Motor neuron (in vitro differentiated cells): ENCODE measurements at regions of chr17 and their contacts with region 1.

Region 1: DNA sequence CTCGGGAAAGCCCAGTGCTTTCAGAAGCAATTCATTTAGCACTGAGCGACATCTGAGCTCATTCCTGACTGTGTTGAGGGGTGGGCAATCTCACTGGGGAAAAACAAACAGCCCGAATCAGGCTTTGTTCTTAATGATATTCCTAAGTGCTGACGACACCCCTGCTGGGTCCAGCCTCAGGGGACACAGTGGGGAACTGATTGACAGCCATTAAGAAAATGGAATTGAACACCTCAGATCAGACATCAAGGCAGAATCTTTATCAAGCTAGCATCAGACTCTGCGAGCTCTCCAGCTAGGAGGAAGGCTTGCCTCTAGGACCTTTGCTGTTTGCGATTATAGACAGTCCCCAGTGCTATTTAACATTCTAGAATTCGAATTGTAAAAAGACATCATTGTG is 22.5 kb upstream of the LYRM9 start:
- ATAC-seq: peak in 7 of 8 experiments; percentile 46 to 90 (median 81)
- H3K4me3 ChIP-seq: no peak overlapping the region
- H3K27ac ChIP-seq: no peak overlapping the region
- H3K4me1 ChIP-seq: no peaks in the 10 kb centered on the region

Region 2: DNA sequence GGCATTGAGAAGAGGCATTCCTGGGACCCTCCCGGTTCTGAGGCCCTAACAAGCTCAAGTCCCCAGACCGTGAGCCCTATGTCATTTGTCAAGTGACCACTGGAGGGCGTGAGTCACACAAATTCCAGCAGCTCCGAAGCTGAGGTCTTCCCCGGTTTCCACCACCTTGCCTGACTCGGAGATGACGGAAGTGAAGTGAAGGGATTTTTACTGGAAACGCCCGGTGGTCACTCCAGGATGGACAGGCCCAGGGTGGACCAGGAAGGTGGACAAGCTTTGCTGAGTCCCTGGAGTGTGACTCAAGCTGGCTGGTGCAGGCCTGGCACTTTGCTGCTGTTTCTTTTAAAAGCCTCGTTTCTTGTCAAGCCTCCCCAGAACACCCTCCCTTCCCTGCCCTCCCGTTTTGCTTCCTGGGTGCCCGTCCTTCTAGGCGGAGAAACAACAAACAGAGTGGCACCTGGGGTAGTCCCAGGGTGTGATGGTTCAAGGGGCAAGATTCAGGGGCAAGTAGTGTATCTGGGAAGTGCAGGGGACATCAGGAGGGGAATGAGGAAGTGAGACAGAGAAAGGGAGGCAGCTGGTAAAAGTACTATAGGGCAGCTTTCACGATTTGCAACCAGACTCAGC is 110.1 kb before region 1 on chr17:
- in situ Hi-C with region 1: loop called in 1 of 9 experiments (anchors 25 kb)
- ATAC-seq: peak; percentile 88 to 100 (median 98)
- H3K4me3 ChIP-seq: peak overlapping the region in 2 of 5 donors; percentile 16 to 17
- H3K27ac ChIP-seq: no peak overlapping the region
- H3K4me1 ChIP-seq: peaks cover 0 to 5% of the 10 kb centered on the region in 2 donors

Region 3: DNA sequence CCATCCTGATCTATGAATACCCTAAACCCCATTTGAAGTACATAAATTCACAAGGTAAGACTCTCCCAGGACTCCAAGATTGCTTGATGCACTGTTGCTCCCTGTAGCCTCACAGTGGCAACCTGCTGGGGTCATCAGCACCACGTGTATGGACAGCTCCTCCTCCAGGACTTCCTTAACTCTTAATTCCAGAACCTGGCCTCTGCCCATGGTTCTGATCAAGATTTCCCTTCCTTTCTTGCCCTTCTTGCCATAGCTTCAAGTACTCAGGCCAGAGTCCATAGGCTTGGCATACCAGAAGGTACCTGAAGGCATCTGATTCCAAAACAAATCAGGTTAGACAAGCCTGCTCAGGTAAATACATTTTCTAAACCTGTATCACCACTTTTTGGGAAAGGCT is 92.8 kb after region 1 on chr17:
- in situ Hi-C with region 1: loop called in 1 of 9 experiments (anchors 25 kb)
- ATAC-seq: peak in 3 of 8 experiments; percentile 94 to 95 (median 94)
- H3K4me3 ChIP-seq: no peak overlapping the region
- H3K27ac ChIP-seq: no peak overlapping the region
- H3K4me1 ChIP-seq: no peaks in the 10 kb centered on the region

Region 4: GRCh38 chr17:28041068-28041843 is 125.5 kb after region 1 on chr17:
- in situ Hi-C with region 1: loop called in 1 of 9 experiments (anchors 25 kb)
- ATAC-seq: peak; percentile 91 to 95 (median 94)
- H3K4me3 ChIP-seq: peak overlapping the region; percentile 63 to 77 (median 69)
- H3K27ac ChIP-seq: peak overlapping the region; percentile 69 to 85
- H3K4me1 ChIP-seq: peaks cover 26 to 33% of the 10 kb centered on the region in 2 donors

Region 5: DNA sequence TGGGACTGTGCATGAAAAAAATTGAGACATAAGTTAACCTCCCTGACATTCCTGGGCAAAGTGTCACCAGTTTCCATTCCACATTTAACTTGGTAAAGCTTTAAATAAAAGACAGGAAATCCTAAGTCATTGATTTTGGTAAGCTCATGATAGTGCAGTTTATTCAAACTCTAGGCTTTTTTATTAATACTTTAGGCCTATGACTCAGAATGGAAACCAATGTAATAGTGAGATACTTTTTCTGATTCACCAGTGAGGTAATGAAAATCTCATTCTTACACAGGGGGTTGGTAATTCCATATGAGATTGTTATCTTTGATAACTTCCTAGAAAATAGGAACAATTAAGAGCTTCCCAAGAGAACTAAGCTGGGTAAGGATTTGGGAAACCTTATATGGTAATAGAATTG is 217.9 kb after region 1 on chr17:
- in situ Hi-C with region 1: loop called in 1 of 9 experiments (anchors 25 kb)
- ATAC-seq: peak in 2 of 8 experiments; percentile 31 to 60
- H3K4me3 ChIP-seq: no peak overlapping the region
- H3K27ac ChIP-seq: no peak overlapping the region
- H3K4me1 ChIP-seq: no peaks in the 10 kb centered on the region